H1 (cell line): ENCODE measurements at regions of chr21 and their contacts with region 1.

Region 1: GRCh38 chr21:31107871-31108270 is 69.6 kb upstream of the KRTAP19-8 start:
- DNase-seq: no peak
- H3K4me3 ChIP-seq: no peak overlapping the region
- H3K27ac ChIP-seq: no peak overlapping the region
- H3K4me1 ChIP-seq: peaks cover 0 to 2% (median 0%) of the 10 kb centered on the region in 4 experiments; a peak in 1 of 7 replicates
- H3K27me3 ChIP-seq: no peaks in the 10 kb centered on the region
- CTCF ChIP-seq: no peak
- EP300 ChIP-seq: no peak
- POLR2A ChIP-seq: no peak
- RAD21 ChIP-seq: no peak

Region 2: DNA sequence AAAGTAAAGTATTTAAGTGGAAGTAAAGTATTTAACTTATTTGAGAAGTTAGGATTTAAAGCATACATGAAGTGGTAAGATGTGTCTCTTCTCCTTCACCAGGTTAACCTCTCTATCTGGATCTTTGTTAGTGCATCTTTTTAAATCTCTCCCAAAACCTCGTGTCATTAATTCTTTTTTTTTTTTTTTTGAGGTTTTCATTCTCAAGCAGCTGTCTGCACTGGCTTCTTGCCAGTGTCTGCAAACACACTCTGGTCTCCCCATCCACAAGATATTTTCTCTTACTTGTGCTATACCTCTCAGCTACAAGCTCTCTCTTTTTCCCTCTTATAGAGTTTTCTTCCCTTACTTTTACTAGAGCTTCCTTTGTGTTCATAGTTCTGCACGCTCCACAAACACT is 990.2 kb before region 1 on chr21:
- CTCF ChIA-PET with region 1: no interaction called
- POLR2A ChIA-PET with region 1: no interaction called
- DNase-seq: no peak
- H3K4me3 ChIP-seq: no peak overlapping the region
- H3K27ac ChIP-seq: no peak overlapping the region
- H3K4me1 ChIP-seq: no peaks in the 10 kb centered on the region
- H3K27me3 ChIP-seq: no peaks in the 10 kb centered on the region
- CTCF ChIP-seq: no peak
- EP300 ChIP-seq: no peak
- POLR2A ChIP-seq: no peak
- RAD21 ChIP-seq: no peak

Region 3: DNA sequence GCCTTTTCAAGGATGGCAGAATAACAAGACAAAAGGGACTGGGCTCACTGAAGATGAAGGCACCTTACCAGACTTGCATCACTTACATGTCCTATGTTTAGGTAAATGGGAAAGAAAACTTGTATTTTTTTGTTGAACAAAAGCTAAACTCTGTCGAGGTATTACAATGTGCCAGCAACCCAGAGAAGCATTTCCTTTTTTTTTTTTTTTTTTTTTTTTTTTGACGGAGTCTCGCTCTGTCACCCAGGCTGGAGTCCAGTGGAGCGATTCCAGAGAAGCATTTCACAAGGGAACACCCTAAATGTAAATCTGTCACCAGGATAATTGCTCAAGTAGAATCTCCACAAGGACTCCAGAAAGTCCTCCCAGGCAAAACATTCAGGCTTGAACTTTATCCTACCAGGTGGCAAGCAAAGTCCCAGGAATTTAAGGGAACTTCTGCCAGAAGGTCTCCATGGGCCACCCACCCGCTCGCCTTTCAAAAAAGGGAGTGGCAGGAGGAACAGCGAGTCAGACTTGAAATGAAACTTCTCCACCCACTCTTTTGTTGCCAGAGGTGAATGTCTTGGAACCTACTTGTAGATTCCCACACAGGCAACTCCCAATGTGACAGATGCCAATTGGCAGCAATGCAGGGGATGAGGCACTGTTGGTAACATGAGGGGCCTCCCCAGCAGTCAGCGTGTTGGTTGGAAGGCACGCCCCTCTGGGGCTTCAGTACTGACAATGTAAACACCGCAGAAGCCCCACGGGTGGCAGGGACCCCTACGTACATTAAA is 111.1 kb after region 1 on chr21:
- CTCF ChIA-PET with region 1: no interaction called
- POLR2A ChIA-PET with region 1: no interaction called
- DNase-seq: no peak
- H3K4me3 ChIP-seq: no peak overlapping the region
- H3K27ac ChIP-seq: no peak overlapping the region
- H3K4me1 ChIP-seq: 0 out of 7 replicates have a peak, but pooled peaks cover 0 to 2% (median 0%) of the 10 kb centered on the region in 4 experiments
- H3K27me3 ChIP-seq: no peaks in the 10 kb centered on the region
- CTCF ChIP-seq: no peak
- EP300 ChIP-seq: no peak
- POLR2A ChIP-seq: no peak
- RAD21 ChIP-seq: no peak

Region 4: DNA sequence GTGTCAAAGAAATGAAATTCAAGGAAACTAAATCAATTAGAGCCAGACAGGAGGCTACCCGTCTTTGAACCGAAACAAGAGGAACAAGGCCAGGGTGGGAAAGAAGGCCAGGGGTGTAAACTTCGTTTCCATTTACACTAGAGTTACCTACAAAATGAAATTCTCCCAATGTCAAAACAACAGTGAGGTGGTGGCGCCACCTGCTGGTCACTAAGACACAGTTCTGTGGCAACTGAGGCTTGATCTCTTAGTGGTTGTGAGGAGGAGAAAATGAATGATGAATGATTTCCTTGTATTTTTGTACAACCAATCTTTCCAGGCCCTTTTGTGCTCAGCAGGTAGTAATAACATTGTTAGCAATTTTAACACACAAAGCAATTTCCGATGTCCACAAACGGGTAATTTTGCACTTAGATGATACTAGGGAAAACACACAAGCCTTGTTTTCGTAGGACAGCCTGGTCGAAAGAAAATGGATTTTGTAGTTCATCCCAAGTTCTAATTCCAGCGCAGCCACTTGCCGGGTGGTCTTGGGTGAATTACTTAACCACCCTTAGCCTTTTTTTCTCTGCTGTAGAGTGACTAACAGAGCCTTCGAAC is 496.8 kb after region 1 on chr21:
- CTCF ChIA-PET with region 1: interaction called, 12 read pairs
- POLR2A ChIA-PET with region 1: no interaction called
- DNase-seq: peak; percentile 46 to 79
- H3K4me3 ChIP-seq: no peak overlapping the region
- H3K27ac ChIP-seq: no peak overlapping the region
- H3K4me1 ChIP-seq: no peaks in the 10 kb centered on the region
- H3K27me3 ChIP-seq: no peaks in the 10 kb centered on the region
- CTCF ChIP-seq: peak; percentile 70 to 87 (median 84)
- EP300 ChIP-seq: no peak
- POLR2A ChIP-seq: no peak
- RAD21 ChIP-seq: peak; percentile 96 to 97